ENCODE measurements at regions of chr7 and their contacts with region 1.

Region 1: GRCh38 chr7:17769918-17770317 is 170.4 kb downstream of the SNX13 start:
- DNase-seq: no peak
- ATAC-seq: peak; percentile 85
- H3K4me3 ChIP-seq: no peak overlapping the region
- H3K27ac ChIP-seq: no peak overlapping the region
- H3K4me1 ChIP-seq: 0 out of 2 replicates have a peak, but pooled peaks cover 3% of the 10 kb centered on the region
- H3K27me3 ChIP-seq: no peaks in the 10 kb centered on the region
- CTCF ChIP-seq: peak; percentile 73 to 86 (median 74)
- EP300 ChIP-seq: no peak
- POLR2A ChIP-seq: no peak
- RAD21 ChIP-seq: peak; percentile 99

Region 2: GRCh38 chr7:17758008-17758407 is 11.9 kb before region 1 on chr7:
- CTCF ChIA-PET with region 1: interaction called, 12 read pairs
- POLR2A ChIA-PET with region 1: no interaction called
- RAD21 ChIA-PET with region 1: interaction called, 4 read pairs
- SMC1A ChIA-PET with region 1: interaction called, 16 read pairs
- in situ Hi-C with region 1: no loop called
- intact Hi-C with region 1: no loop called
- DNase-seq: no peak
- ATAC-seq: no peak
- H3K4me3 ChIP-seq: no peak overlapping the region
- H3K27ac ChIP-seq: no peak overlapping the region
- H3K4me1 ChIP-seq: no peaks in the 10 kb centered on the region
- H3K27me3 ChIP-seq: no peaks in the 10 kb centered on the region
- CTCF ChIP-seq: no peak
- EP300 ChIP-seq: no peak
- POLR2A ChIP-seq: no peak
- RAD21 ChIP-seq: no peak

Region 3: DNA sequence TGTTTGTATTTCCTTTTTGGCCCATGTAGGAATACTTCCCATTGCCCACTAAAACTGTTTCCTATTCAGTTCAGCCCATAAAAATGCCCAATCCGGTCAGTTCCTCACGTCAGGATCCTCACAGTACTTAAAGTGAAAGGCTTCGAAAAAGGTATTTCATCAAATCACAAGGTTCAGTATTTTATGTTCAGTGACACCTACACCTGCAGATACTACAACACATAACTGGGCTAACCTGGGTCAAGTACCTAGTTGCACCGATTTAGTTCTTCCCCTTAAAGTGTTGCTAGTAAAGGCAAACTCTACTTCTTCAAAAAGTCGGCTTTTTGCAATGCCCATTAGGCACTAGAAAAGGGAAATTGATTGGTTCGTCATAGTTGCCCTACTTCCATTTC is 169.3 kb after region 1 on chr7:
- CTCF ChIA-PET with region 1: interaction called, 28 read pairs
- POLR2A ChIA-PET with region 1: interaction called, 4 read pairs
- RAD21 ChIA-PET with region 1: interaction called, 13 read pairs
- SMC1A ChIA-PET with region 1: interaction called, 18 read pairs
- in situ Hi-C with region 1: no loop called
- intact Hi-C with region 1: no loop called
- DNase-seq: no peak
- ATAC-seq: no peak
- H3K4me3 ChIP-seq: peak overlapping the region; percentile 96
- H3K27ac ChIP-seq: peak overlapping the region; percentile 87; the same call in 1 of the 2 replicates
- H3K4me1 ChIP-seq: peaks cover 9% of the 10 kb centered on the region
- H3K27me3 ChIP-seq: peaks cover 0 to 4% of the 10 kb centered on the region in 2 experiments; a peak in 1 of 4 replicates
- CTCF ChIP-seq: no peak
- EP300 ChIP-seq: no peak
- POLR2A ChIP-seq: no peak
- RAD21 ChIP-seq: no peak

Region 4: DNA sequence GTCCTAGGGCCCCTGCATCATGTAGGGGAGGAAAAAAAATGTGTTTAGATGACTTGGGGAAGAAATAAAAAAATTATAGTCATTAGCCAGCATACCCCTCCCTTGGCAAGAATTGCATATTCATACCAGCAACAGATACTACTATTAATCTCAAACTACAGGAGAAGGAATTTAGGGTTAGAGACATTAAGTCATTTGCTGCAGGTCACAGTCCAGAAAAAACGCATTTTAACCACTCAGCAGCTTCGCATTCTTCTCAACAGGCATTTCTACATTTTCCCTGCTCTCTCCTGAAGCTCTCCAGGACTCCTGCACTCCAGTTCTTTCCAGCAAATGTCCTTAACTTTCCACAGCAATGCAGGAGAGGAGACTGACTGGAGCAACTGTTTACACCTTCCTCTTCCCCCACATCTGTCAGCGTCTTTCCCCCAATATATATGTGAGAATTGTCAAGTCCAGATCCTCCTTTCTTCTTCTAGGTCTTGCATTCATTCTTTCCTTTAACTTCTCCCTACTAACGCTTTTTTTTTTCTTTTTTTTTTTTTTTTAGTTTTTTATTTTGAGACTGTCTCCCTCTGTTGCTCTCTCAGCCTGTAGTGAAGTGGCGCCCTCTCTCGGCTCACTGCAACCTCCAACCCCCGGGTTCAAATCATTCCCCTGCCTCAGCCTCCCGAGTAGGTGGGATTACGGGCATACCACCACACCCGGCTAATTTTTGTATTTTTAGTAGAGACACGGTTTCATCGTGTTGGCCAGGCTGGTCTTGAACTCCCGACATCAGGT is 222.1 kb after region 1 on chr7:
- CTCF ChIA-PET with region 1: interaction called, 193 read pairs
- POLR2A ChIA-PET with region 1: no interaction called
- RAD21 ChIA-PET with region 1: interaction called, 94 read pairs
- SMC1A ChIA-PET with region 1: interaction called, 63 read pairs
- in situ Hi-C with region 1: no loop called
- intact Hi-C with region 1: loop called (anchors 1 kb)
- DNase-seq: no peak
- ATAC-seq: peak; percentile 79
- H3K4me3 ChIP-seq: no peak overlapping the region
- H3K27ac ChIP-seq: no peak overlapping the region
- H3K4me1 ChIP-seq: no peaks in the 10 kb centered on the region
- H3K27me3 ChIP-seq: no peaks in the 10 kb centered on the region
- CTCF ChIP-seq: peak; percentile 33 to 55 (median 41)
- EP300 ChIP-seq: no peak
- POLR2A ChIP-seq: no peak
- RAD21 ChIP-seq: peak; percentile 63

Region 5: GRCh38 chr7:18151422-18151821 is 381.5 kb after region 1 on chr7:
- CTCF ChIA-PET with region 1: interaction called, 11 read pairs
- POLR2A ChIA-PET with region 1: no interaction called
- RAD21 ChIA-PET with region 1: interaction called, 5 read pairs
- SMC1A ChIA-PET with region 1: interaction called, 5 read pairs
- in situ Hi-C with region 1: no loop called
- intact Hi-C with region 1: no loop called
- DNase-seq: no peak
- ATAC-seq: peak; percentile 54; the same call in 2 of the 3 replicates
- H3K4me3 ChIP-seq: no peak overlapping the region
- H3K27ac ChIP-seq: no peak overlapping the region
- H3K4me1 ChIP-seq: no peaks in the 10 kb centered on the region
- H3K27me3 ChIP-seq: no peaks in the 10 kb centered on the region
- CTCF ChIP-seq: no peak; a peak in 1 of 6 replicates
- EP300 ChIP-seq: no peak
- POLR2A ChIP-seq: no peak
- RAD21 ChIP-seq: 0 out of 2 replicates have a peak, but pooled peaks have one; percentile 22

Region 6: GRCh38 chr7:18352339-18353255 is 582.7 kb after region 1 on chr7:
- CTCF ChIA-PET with region 1: interaction called, 15 read pairs
- POLR2A ChIA-PET with region 1: no interaction called
- RAD21 ChIA-PET with region 1: interaction called, 5 read pairs
- SMC1A ChIA-PET with region 1: interaction called, 9 read pairs
- in situ Hi-C with region 1: no loop called
- intact Hi-C with region 1: no loop called
- DNase-seq: no peak
- ATAC-seq: peak; percentile 74
- H3K4me3 ChIP-seq: no peak overlapping the region
- H3K27ac ChIP-seq: no peak overlapping the region
- H3K4me1 ChIP-seq: no peaks in the 10 kb centered on the region
- H3K27me3 ChIP-seq: no peaks in the 10 kb centered on the region
- CTCF ChIP-seq: peak; percentile 42 to 73 (median 63); a peak in 5 of 6 replicates
- EP300 ChIP-seq: no peak
- POLR2A ChIP-seq: no peak
- RAD21 ChIP-seq: peak; percentile 81

Measured in GM12878 (cell line).